ENCODE measurements at regions of chr4 and their contacts with region 1.

Region 1: DNA sequence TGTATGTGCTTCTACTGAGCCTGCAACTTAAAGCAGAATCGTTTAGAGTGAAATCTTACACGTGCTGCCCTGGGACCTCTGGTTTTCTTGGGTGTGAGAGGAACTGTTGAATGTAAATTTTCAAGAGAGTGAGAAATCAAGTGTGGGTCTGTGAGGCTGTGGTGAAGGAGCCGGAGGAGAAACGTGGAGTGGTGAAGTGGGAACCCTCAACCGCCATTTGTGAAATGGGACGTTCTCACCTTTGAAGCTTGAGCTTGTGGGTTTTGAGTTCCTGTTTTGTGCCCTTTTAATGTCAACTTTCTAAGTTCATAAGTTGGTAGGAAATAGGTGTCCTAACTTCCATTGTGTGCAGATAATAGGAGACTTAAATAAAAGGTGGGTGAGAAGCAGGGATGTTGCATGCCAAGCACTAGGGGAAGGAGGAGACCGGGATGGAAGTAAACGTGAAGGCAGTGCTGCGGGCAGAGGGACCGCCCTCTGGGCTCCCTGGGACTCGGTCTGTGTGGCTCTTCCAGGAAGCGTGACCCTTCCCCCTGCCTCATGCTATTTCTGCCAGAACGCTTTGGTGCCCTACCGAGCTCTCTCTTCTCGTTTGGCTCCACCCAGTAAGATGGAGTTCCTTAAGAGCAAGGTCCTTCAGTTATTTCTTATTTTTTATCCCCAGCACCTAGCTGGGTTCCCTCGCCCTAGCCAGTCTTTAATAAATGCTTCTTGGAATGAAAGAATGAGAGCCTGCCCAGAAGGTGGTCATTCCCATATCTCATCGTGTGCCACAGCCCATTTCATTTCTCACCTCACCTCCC is 56.0 kb downstream of the TMEM131L start:
- DNase-seq: peak; percentile 66
- ATAC-seq: peak; percentile 29
- H3K4me3 ChIP-seq: peak overlapping the region in 3 of 5 experiments; percentile 14 to 51 (median 17)
- H3K4me3 Mint-ChIP-seq: peak overlapping the region; percentile 82
- H3K27ac ChIP-seq: peak overlapping the region; percentile 61 to 87
- H3K27ac Mint-ChIP-seq: peak overlapping the region; percentile 88
- H3K4me1 ChIP-seq: peaks cover 91 to 96% of the 10 kb centered on the region in 2 donors
- H3K4me1 Mint-ChIP-seq: peaks cover 96% of the 10 kb centered on the region
- H3K27me3 ChIP-seq: no peaks in the 10 kb centered on the region
- H3K27me3 Mint-ChIP-seq: no peaks in the 10 kb centered on the region
- CTCF ChIP-seq: no peak

Region 2: GRCh38 chr4:153497988-153498967 is 23.9 kb before region 1 on chr4:
- CTCF ChIA-PET with region 1: interaction called, 6 read pairs
- POLR2A ChIA-PET with region 1: interaction called, 3 read pairs
- intact Hi-C with region 1: loop called (anchors 1 kb)
- DNase-seq: peak; percentile 62
- ATAC-seq: peak; percentile 82
- H3K4me3 ChIP-seq: peak overlapping the region in 2 of 5 experiments; percentile 18 to 30
- H3K4me3 Mint-ChIP-seq: peak overlapping the region; percentile 75
- H3K27ac ChIP-seq: peak overlapping the region; percentile 7 to 98
- H3K27ac Mint-ChIP-seq: peak overlapping the region; percentile 85
- H3K4me1 ChIP-seq: peaks cover 80 to 83% of the 10 kb centered on the region in 2 donors
- H3K4me1 Mint-ChIP-seq: peaks cover 91% of the 10 kb centered on the region
- H3K27me3 ChIP-seq: no peaks in the 10 kb centered on the region
- H3K27me3 Mint-ChIP-seq: no peaks in the 10 kb centered on the region
- CTCF ChIP-seq: no peak

Region 3: GRCh38 chr4:153535772-153536513 is 13.7 kb after region 1 on chr4:
- CTCF ChIA-PET with region 1: interaction called, 6 read pairs
- POLR2A ChIA-PET with region 1: no interaction called
- intact Hi-C with region 1: loop called (anchors 2 kb)
- DNase-seq: peak; percentile 41
- ATAC-seq: peak; percentile 33
- H3K4me3 ChIP-seq: no peak overlapping the region
- H3K4me3 Mint-ChIP-seq: peak overlapping the region; percentile 64
- H3K27ac ChIP-seq: peak overlapping the region; percentile 45 to 74
- H3K27ac Mint-ChIP-seq: peak overlapping the region; percentile 85
- H3K4me1 ChIP-seq: peaks cover 68 to 69% of the 10 kb centered on the region in 2 donors
- H3K4me1 Mint-ChIP-seq: peaks cover 78% of the 10 kb centered on the region
- H3K27me3 ChIP-seq: no peaks in the 10 kb centered on the region
- H3K27me3 Mint-ChIP-seq: no peaks in the 10 kb centered on the region
- CTCF ChIP-seq: peak; percentile 52

Measured in B cell (primary cell).